Activated naive CD4-positive, alpha-beta T cell treated with anti-CD3 and anti-CD28 coated beads for 36 hours (primary cell): ENCODE measurements at regions of chr12 and their contacts with region 1.

Region 1: DNA sequence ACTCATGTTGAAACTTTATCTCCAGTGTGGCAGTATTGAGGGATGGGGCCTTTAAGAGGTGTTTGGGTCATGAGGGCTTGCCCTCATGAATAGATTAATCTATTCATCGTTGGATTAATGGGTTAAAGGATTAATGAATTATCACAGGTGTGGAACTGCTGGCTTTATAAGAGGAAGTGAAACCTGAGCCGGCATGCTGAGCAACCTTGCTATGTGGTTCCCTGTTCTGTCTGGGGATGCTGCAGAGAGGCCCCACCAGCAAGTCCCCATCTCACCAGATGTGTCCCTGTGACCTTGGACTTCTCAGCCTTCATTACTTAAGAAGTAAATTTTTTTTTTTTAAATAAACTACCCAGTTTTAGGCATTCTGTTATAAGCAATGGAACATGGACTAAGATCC is 109.6 kb downstream of the DYRK2 start:
- DNase-seq: peak; percentile 9
- H3K4me3 Mint-ChIP-seq: no peak overlapping the region
- H3K27ac Mint-ChIP-seq: no peak overlapping the region
- H3K4me1 Mint-ChIP-seq: peaks cover 49% of the 10 kb centered on the region
- H3K27me3 Mint-ChIP-seq: no peaks in the 10 kb centered on the region

Region 2: GRCh38 chr12:67827820-67828383 is 69.8 kb after region 1 on chr12:
- CTCF ChIA-PET with region 1: no interaction called
- intact Hi-C with region 1: loop called (anchors 1 kb)
- DNase-seq: peak; percentile 79
- H3K4me3 Mint-ChIP-seq: peak overlapping the region; percentile 30
- H3K27ac Mint-ChIP-seq: peak overlapping the region; percentile 65
- H3K4me1 Mint-ChIP-seq: peaks cover 11% of the 10 kb centered on the region
- H3K27me3 Mint-ChIP-seq: no peaks in the 10 kb centered on the region